ENCODE measurements at regions of chr9 and their contacts with region 1.

Region 1: GRCh38 chr9:447230-448025 is 232.8 kb downstream of the DOCK8 start:
- DNase-seq: peak; percentile 85
- H3K4me3 Mint-ChIP-seq: peak overlapping the region; percentile 64
- H3K27ac Mint-ChIP-seq: peak overlapping the region; percentile 90
- H3K4me1 Mint-ChIP-seq: peaks cover 54% of the 10 kb centered on the region
- H3K27me3 Mint-ChIP-seq: no peaks in the 10 kb centered on the region

Region 2: DNA sequence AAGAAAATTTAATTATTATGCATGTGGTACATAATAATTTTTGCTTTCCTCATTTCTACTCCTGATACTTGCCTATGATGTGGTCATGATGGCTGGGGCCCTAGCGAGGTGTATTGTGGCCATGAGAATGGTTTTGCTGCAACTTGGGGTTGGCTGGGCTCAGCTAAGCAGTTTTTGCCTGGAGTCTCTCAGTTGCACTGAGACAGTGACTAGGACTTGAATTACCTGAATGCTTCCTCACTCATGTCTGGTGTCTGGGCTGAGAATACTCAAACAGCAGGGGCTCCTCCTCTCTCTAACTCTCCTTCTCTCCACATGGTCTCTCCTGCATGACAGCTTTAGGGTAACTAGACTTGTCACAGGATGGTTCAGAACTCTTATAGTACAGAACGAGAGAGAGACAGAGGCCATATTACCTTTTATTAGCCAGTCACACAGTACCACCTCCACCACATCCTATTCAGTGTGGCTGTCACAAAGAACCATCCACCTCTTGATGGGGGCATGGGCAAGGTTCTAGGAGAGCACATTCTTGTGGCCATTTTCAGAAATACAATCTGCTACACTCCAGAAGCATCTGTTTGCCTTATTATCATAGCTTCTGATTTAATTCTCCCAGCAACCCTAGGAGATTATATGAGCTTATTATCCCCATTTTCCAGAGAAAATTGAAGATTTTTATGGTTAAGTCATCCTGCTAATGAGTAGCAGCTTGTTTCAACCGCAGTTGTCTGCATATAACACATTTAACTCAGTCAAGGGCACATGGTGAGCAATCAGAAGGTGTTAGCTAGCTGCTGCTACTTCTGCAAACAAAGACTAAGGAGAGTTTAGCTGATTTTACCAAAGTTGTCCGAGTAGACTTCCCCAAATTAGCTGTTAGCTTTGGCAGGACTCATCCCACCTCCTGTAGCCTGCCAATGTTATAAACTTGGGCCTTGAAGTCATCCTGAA is 12.3 kb after region 1 on chr9:
- CTCF ChIA-PET with region 1: interaction called, 33 read pairs
- POLR2A ChIA-PET with region 1: interaction called, 45 read pairs
- DNase-seq: peak; percentile 40
- H3K4me3 Mint-ChIP-seq: no peak overlapping the region
- H3K27ac Mint-ChIP-seq: peak overlapping the region; percentile 79
- H3K4me1 Mint-ChIP-seq: peaks cover 38% of the 10 kb centered on the region
- H3K27me3 Mint-ChIP-seq: no peaks in the 10 kb centered on the region

Region 3: DNA sequence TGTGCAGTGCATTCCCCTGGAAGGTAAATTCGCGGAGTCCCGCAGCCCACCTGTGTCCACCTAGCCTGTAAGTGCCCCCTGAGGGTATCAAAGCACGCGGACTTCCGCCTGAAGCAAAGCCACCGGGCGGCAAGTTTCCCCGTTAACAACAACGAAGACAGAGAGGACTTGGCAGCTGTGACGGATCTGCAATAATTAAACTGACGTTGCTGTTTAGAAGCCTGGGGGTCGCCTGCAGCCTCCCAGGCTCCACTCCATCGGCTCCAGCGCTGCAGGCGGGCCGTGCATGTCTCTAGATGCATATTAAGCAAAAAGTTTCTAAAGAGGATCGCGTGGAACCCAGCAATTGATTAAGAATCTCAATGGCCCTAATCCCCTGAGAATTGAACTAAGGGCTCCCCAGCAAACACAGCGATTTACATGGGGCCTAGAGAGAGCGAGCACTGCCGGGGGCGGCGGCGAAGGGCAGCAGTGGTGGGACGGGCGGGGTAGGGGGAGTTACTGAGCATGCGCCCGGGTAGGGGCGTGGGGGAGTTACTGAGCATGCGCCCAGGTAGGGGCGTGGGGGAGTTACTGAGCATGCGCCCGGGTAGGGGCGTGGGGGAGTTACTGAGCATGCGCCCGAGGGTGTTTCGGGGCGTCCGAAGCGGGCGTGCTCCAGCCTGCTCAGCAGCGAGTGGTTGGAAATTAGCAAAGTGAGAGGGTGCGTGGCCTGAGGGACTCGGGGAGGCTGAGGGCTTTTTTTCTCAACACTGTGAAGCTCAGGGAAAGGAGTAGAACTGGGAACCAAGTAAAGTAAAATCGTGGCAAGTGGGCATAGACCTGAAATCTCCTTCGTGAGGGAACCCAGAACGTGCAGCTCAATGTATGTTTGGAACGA is 22.5 kb after region 1 on chr9:
- CTCF ChIA-PET with region 1: interaction called, 7 read pairs
- POLR2A ChIA-PET with region 1: interaction called, 26 read pairs
- DNase-seq: peak; percentile 92
- H3K4me3 Mint-ChIP-seq: peak overlapping the region; percentile 90
- H3K27ac Mint-ChIP-seq: peak overlapping the region; percentile 80
- H3K4me1 Mint-ChIP-seq: peaks cover 28% of the 10 kb centered on the region
- H3K27me3 Mint-ChIP-seq: no peaks in the 10 kb centered on the region